Activated CD8-positive, alpha-beta T cell treated with anti-CD3 and anti-CD28 coated beads, Interleukin-2, amount 10 ng/mL, durations not matched to agents 7 days and 5 days (primary cell): ENCODE measurements at regions of chr3 and their contacts with region 1.

Region 1: DNA sequence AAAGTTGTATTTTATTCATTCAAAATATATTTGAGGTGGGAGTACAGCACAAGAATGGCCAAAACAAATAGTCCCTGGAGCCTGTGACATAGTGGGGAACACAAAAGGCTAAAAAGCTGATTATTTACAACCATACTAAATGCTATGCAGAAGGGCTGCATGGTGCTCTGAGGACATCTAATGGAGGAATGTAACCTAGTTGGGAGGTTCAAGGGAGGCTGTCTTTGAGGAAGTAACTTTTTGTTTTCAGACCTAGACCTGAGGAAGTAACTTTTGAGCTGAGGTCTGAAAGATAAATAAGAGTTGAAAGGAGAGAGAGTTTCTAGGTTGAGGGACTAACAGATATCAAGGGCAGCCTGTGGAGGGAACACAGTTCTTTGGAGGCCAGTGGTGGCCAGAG is 34.8 kb upstream of the RASA2 start:
- DNase-seq: peak; percentile 76
- ATAC-seq: peak; percentile 90
- H3K4me3 Mint-ChIP-seq: no peak overlapping the region
- H3K27ac Mint-ChIP-seq: no peak overlapping the region
- H3K4me1 Mint-ChIP-seq: peaks cover 8% of the 10 kb centered on the region
- H3K27me3 Mint-ChIP-seq: no peaks in the 10 kb centered on the region

Region 2: DNA sequence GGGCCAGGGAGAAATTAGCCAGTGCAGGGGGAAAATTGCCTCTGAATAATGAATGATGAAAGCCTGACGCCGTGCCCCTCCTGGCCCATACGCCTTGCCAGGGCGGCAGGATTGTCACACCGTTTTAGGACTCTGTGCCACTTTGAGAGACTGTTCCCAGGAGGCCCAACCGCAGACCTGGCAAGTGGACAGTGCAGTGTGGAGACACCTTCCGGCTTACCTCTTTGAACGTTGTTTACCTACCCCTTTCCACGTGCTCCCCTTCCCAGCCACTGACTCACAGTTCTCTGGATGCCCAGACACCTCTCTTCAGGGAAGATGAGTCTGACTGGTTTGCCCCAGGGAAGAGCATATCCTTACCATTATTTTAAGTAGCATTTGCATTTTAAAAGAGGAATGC is 304.4 kb before region 1 on chr3:
- CTCF ChIA-PET with region 1: no interaction called
- POLR2A ChIA-PET with region 1: no interaction called
- DNase-seq: no peak
- ATAC-seq: no peak
- H3K4me3 Mint-ChIP-seq: no peak overlapping the region
- H3K27ac Mint-ChIP-seq: no peak overlapping the region
- H3K4me1 Mint-ChIP-seq: peaks cover 15% of the 10 kb centered on the region
- H3K27me3 Mint-ChIP-seq: peaks cover 4% of the 10 kb centered on the region

Region 3: GRCh38 chr3:141237701-141238521 is 214.1 kb before region 1 on chr3:
- CTCF ChIA-PET with region 1: interaction called, 31 read pairs
- POLR2A ChIA-PET with region 1: no interaction called
- DNase-seq: peak; percentile 37
- ATAC-seq: peak; percentile 63
- H3K4me3 Mint-ChIP-seq: peak overlapping the region; percentile 41
- H3K27ac Mint-ChIP-seq: peak overlapping the region; percentile 88
- H3K4me1 Mint-ChIP-seq: peaks cover 89% of the 10 kb centered on the region
- H3K27me3 Mint-ChIP-seq: no peaks in the 10 kb centered on the region

Region 4: DNA sequence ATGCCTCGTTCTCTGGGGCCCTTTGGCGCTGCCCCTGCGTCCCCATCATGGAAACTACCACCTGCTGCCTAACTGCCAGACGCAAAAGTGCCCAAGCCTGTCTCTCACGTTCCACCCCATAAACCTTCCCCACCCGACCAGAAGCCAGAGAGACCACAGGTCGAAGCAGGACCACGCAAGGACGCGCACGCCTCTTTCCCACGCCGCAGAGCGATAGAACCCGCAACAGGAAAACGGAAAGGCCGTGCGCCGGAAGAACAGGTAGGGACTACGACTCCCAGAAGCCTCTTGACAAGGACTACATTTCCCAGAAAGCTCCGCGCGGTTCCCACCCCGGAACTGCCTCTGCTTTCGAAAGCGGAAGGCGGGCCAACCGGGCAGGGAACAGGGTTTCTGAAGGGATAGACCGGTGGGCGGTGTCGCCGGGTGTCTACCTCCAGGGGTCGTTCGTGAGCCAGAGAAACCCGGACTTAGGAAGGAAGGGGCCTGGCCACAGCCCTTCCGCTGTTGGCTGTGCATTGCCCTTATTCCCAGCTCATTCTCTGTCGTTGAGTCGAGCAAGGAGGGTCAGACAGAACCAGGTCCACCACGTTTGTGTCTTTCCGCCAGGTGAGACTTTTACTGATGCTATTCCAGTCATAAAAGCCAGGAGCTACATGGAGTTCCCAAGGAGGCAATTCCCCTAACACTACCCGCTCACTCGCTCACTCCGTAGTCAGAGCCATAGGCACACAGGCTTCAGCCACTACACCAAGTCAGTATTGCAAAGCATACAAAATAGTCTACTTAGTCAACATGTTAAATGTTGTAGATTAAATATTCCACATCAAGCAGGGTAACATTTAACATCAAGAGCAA is 140.3 kb before region 1 on chr3:
- CTCF ChIA-PET with region 1: interaction called, 267 read pairs
- POLR2A ChIA-PET with region 1: interaction called, 10 read pairs
- DNase-seq: peak; percentile 100
- ATAC-seq: peak; percentile 95
- H3K4me3 Mint-ChIP-seq: peak overlapping the region; percentile 85
- H3K27ac Mint-ChIP-seq: peak overlapping the region; percentile 99
- H3K4me1 Mint-ChIP-seq: peaks cover 57% of the 10 kb centered on the region
- H3K27me3 Mint-ChIP-seq: no peaks in the 10 kb centered on the region

Region 5: DNA sequence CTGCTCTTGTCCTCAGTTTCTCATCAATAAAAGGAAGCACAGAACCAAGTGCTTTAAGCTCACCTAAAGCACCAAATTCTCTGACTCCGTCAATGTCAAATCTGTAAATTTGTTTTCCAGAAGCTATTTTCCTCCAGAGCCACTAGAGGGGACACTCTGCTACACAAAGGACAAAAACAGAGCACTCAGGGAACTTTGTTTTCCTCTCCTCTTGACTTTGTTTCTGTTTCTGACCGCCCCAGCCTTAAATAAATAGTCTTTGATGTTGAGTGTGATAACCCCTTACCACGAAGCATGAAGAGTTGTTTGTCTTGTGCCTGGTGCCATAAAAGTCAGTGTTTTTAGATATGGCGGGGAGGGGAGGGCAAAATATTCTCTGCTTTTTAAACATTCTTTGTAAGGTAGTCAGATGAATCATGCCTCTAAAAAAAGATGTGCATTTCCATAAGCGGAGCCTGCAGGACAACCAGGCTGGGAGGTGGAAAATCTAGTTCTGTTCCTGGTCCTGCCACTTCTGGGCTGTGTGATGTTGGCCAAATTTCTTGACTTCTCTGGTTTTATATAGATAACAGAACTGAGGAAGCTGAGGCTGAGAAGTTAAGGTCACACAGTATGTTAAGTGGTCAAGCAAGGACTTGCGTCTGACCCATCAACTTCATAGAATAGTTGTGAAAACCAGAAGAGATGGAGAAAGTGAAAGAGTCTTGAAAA is 91.0 kb before region 1 on chr3:
- CTCF ChIA-PET with region 1: interaction called, 185 read pairs
- POLR2A ChIA-PET with region 1: interaction called, 4 read pairs
- DNase-seq: peak; percentile 42
- ATAC-seq: peak; percentile 65
- H3K4me3 Mint-ChIP-seq: no peak overlapping the region
- H3K27ac Mint-ChIP-seq: no peak overlapping the region
- H3K4me1 Mint-ChIP-seq: peaks cover 11% of the 10 kb centered on the region
- H3K27me3 Mint-ChIP-seq: peaks cover 10% of the 10 kb centered on the region

Region 6: GRCh38 chr3:141412087-141412935 is 39.7 kb before region 1 on chr3:
- CTCF ChIA-PET with region 1: interaction called, 14 read pairs
- POLR2A ChIA-PET with region 1: no interaction called
- DNase-seq: peak; percentile 79
- ATAC-seq: peak; percentile 62
- H3K4me3 Mint-ChIP-seq: peak overlapping the region; percentile 79
- H3K27ac Mint-ChIP-seq: peak overlapping the region; percentile 97
- H3K4me1 Mint-ChIP-seq: peaks cover 68% of the 10 kb centered on the region
- H3K27me3 Mint-ChIP-seq: no peaks in the 10 kb centered on the region

Region 7: DNA sequence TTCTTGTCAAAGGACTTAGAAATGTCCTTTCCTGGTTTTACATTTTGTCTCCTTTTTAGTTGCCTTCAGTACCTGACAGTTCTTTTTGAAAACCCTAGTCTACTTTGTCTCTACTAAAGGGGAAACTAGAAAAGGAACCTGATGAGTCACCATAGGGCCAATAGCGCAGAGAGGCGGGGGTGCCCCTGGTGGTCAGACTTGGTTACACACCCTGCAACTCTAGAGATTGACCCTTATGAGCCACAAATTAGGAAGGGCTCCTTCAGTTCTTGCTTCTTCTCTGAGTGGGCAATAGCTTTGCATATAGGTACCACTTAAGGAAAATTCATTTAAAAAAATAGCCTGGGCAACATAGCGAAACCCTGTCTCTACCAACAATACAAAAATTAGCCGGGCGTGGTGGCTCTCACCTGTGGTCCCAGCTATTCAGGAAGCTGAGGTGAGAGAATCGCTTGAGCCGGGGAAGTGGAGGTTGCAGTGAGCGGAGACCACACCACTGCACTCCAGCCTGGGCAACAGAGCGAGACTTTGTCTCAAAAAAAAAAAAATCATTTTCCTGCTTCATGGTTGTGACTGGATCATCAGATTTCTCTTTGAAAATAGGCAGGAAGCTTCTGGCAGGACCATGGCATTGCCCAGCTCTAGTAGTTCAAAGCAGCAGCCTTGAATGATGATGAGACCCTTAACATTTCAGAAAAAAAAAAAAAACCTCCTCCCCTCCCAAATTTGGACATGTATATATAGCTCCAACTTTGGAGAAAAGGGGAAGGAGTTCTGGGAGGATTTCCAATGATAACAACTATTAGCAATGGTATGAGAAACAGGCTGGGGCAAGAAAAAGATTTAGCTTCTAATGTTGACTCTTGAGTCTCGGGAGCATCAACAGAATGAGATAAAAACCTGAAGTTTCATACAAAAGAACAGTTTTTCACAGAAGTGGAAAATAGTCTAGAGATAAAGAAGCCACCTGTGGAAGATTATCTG is 10.4 kb before region 1 on chr3:
- CTCF ChIA-PET with region 1: interaction called, 109 read pairs
- POLR2A ChIA-PET with region 1: no interaction called
- DNase-seq: peak; percentile 87
- ATAC-seq: peak; percentile 99
- H3K4me3 Mint-ChIP-seq: peak overlapping the region; percentile 20
- H3K27ac Mint-ChIP-seq: peak overlapping the region; percentile 55
- H3K4me1 Mint-ChIP-seq: peaks cover 31% of the 10 kb centered on the region
- H3K27me3 Mint-ChIP-seq: no peaks in the 10 kb centered on the region

Region 8: DNA sequence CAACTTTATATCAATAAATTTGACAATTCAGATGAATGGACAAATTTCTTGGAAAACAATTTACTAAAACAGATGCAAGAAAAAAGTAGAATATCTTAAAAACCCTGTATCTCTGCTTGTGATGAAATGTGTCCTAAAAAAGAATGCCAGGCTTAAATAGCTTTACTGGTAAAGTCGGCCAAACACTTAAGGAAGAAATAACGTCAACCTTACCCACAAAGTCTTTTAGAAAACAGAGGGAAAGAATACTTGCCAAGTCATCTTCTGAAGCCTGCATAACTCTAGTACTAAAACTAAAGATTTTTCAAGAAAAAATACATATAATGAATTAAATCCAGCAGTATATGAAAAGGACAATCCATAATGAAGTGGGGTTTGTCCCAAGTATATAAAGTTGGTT is 145.9 kb after region 1 on chr3:
- CTCF ChIA-PET with region 1: no interaction called
- POLR2A ChIA-PET with region 1: no interaction called
- DNase-seq: no peak
- ATAC-seq: no peak
- H3K4me3 Mint-ChIP-seq: no peak overlapping the region
- H3K27ac Mint-ChIP-seq: no peak overlapping the region
- H3K4me1 Mint-ChIP-seq: no peaks in the 10 kb centered on the region
- H3K27me3 Mint-ChIP-seq: no peaks in the 10 kb centered on the region